ENCODE measurements at regions of chr6 and their contacts with region 1.

Region 1: GRCh38 chr6:10429638-10430427 is 15.0 kb upstream of the TFAP2A start:
- DNase-seq: no peak
- H3K4me3 Mint-ChIP-seq: no peak overlapping the region
- H3K27ac Mint-ChIP-seq: no peak overlapping the region
- H3K4me1 Mint-ChIP-seq: peaks cover 27% of the 10 kb centered on the region
- H3K27me3 Mint-ChIP-seq: peaks cover 38% of the 10 kb centered on the region

Region 2: GRCh38 chr6:8983188-8983688 is 1446.6 kb before region 1 on chr6:
- intact Hi-C with region 1: loop called (anchors 1 kb)
- DNase-seq: peak; percentile 32
- H3K4me3 Mint-ChIP-seq: no peak overlapping the region
- H3K27ac Mint-ChIP-seq: no peak overlapping the region
- H3K4me1 Mint-ChIP-seq: no peaks in the 10 kb centered on the region
- H3K27me3 Mint-ChIP-seq: peaks cover 3% of the 10 kb centered on the region

Region 3: GRCh38 chr6:9810276-9810675 is 619.6 kb before region 1 on chr6:
- intact Hi-C with region 1: no loop called
- DNase-seq: no peak
- H3K4me3 Mint-ChIP-seq: no peak overlapping the region
- H3K27ac Mint-ChIP-seq: no peak overlapping the region
- H3K4me1 Mint-ChIP-seq: no peaks in the 10 kb centered on the region
- H3K27me3 Mint-ChIP-seq: no peaks in the 10 kb centered on the region

Region 4: DNA sequence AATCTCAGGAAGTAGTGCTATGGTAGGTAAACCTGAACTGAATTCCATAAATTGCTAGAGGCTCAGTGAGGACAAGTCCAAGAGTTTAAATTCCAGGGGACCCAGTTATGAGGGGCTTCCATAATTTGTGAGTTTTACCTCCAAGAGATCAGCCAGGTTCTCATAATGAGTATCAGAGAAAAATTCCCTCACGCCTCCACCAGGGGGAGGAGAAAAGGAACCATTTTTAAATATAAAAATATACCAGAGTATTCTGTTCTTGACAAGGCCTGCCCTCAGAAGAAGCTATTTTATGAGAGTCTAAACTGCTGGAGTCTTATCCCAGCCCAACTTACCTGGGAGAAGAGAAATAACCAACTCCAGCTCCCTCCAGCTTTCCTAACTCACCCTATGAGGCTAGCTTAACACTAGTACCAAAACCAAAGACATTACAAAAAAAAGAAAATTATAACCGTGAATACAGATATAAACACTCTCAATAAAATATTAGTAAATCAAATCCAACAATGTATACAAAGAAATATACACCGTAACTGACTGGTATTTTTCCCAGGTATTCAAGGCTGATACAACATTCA is 173.6 kb before region 1 on chr6:
- intact Hi-C with region 1: loop called (anchors 1 kb)
- DNase-seq: no peak
- H3K4me3 Mint-ChIP-seq: no peak overlapping the region
- H3K27ac Mint-ChIP-seq: no peak overlapping the region
- H3K4me1 Mint-ChIP-seq: no peaks in the 10 kb centered on the region
- H3K27me3 Mint-ChIP-seq: peaks cover 3% of the 10 kb centered on the region

Region 5: DNA sequence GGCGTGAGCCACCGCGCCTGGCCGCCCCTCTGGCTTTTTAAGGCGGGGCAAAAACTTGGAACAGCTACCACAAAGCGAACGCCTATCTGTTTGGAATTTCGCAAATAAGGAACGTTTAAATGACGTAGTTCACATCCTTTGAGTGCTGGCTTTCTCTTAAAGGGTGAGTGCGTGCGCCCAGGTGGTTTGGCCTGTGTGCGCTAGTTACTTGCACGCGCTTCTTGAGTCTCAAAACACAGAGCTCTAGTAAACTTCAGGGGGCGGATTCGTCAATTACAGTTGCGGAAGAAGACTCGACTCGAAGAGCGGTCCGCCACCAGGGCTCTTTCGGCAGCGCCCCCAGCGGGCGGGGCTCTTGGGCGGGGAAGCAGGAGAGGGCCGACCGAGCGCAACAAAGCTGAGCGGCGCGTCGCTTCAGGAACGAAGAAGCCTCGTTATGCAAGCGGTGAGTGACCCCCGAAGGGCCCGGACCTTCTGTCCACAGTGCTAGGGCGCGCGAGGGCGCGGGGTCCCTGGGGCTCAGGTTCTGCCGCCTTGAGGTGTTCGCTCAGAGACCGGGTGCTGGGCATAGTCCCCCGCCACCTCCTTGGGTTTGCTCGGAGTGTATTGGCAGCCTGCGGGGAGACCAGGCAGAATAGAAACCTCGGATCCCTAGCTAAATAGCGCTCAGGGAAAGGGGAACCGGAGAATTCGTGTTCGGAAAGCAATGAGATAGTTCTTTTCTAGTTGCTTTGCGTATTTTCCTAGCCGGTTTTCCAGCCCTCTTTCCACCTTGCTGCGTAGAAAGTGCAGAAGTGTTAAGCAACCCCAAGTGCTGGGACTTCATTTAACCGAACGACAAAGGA is 457.1 kb after region 1 on chr6 and contains the start of gene SYCP2L:
- intact Hi-C with region 1: loop called (anchors 10 kb)
- DNase-seq: no peak
- H3K4me3 Mint-ChIP-seq: no peak within 1 kb of the TSS
- H3K27ac Mint-ChIP-seq: no peak within 1 kb of the TSS
- H3K4me1 Mint-ChIP-seq: no peaks in the 10 kb centered on the region
- H3K27me3 Mint-ChIP-seq: peaks cover 63% of the 10 kb centered on the region
- total RNA-seq, gene SYCP2L: not detected in 2 replicates